ENCODE measurements at regions of chr20 and their contacts with region 1.

Region 1: DNA sequence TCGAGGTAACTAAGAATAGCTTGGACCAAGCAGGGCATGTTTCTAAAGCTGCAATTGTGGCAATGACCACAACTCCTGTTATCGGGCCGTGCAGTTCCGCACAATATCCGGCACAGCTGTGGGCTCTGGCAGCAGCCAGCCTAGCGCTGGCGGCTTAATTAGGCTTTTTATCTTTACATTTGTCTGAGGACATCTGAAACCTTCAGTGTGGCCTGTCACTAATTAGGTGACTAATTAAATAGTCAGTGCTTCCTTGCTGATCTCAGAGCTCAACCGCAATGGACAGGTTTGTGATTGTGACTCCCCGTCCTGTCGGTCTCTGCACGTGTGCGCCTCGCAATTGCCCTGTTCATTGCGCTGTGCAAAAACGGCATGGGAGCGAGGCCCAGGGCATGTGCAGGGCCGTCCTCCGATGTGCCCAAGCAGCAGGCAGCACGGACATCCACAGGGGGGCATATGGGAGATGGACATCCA is 134.8 kb upstream of the INSM1 start:
- DNase-seq: no peak
- ATAC-seq: no peak
- H3K4me3 ChIP-seq: no peak overlapping the region
- H3K27ac ChIP-seq: no peak overlapping the region
- H3K4me1 ChIP-seq: no peaks in the 10 kb centered on the region
- H3K27me3 ChIP-seq: peaks cover 0 to 13% of the 10 kb centered on the region in 2 donors
- CTCF ChIP-seq: no peak

Region 2: DNA sequence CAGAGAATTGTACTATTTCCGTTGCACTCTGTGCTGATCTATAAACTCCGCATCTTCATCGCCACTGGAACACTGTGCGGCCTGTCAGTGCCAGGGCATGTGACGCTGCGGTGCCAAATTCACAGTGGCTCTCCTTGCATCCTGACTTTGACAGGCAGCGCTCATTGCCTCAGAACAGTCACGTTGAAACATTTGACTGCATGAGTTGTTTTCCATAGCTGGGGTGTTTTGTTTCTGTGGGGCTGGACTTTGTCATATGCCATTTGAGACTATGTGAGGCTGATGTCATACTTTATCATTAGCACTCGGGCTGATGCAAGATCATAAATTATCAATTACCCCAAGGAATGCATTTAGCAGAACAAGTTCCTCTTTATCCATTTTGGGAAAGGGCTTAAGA is 148.0 kb before region 1 on chr20:
- intact Hi-C with region 1: loop called in 1 of 2 experiments (anchors 5 kb)
- DNase-seq: no peak
- ATAC-seq: no peak
- H3K4me3 ChIP-seq: no peak overlapping the region
- H3K27ac ChIP-seq: no peak overlapping the region
- H3K4me1 ChIP-seq: no peaks in the 10 kb centered on the region
- H3K27me3 ChIP-seq: peaks cover 0 to 7% of the 10 kb centered on the region in 2 donors
- CTCF ChIP-seq: no peak

Region 3: GRCh38 chr20:20369250-20370093 is 136.4 kb after region 1 on chr20:
- intact Hi-C with region 1: no loop called
- DNase-seq: no peak
- ATAC-seq: peak; percentile 50
- H3K4me3 ChIP-seq: no peak overlapping the region
- H3K27ac ChIP-seq: no peak overlapping the region
- H3K4me1 ChIP-seq: peaks cover 0 to 40% of the 10 kb centered on the region in 2 donors
- H3K27me3 ChIP-seq: peaks cover 86 to 100% of the 10 kb centered on the region in 2 donors
- CTCF ChIP-seq: no peak

Measured in left lung (tissue), 14 donors.